Vagina (tissue), 2 donors: ENCODE measurements at regions of chr2 and their contacts with region 1.

Region 1: GRCh38 chr2:190853531-190854383 is 26.9 kb upstream of the GLS start:
- DNase-seq: no peak
- H3K4me3 ChIP-seq: no peak overlapping the region
- H3K27ac ChIP-seq: no peak overlapping the region
- H3K4me1 ChIP-seq: no peaks in the 10 kb centered on the region
- H3K27me3 ChIP-seq: no peaks in the 10 kb centered on the region
- CTCF ChIP-seq: no peak
- POLR2A ChIP-seq: no peak

Region 2: GRCh38 chr2:190959911-190960788 is 106.4 kb after region 1 on chr2:
- intact Hi-C with region 1: no loop called
- DNase-seq: no peak
- H3K4me3 ChIP-seq: no peak overlapping the region
- H3K27ac ChIP-seq: no peak overlapping the region
- H3K4me1 ChIP-seq: no peaks in the 10 kb centered on the region
- H3K27me3 ChIP-seq: no peaks in the 10 kb centered on the region
- CTCF ChIP-seq: no peak
- POLR2A ChIP-seq: no peak

Region 3: GRCh38 chr2:191030521-191031154 is 176.9 kb after region 1 on chr2:
- intact Hi-C with region 1: loop called (anchors 10 kb)
- DNase-seq: no peak
- H3K4me3 ChIP-seq: no peak overlapping the region
- H3K27ac ChIP-seq: no peak overlapping the region
- H3K4me1 ChIP-seq: no peaks in the 10 kb centered on the region
- H3K27me3 ChIP-seq: no peaks in the 10 kb centered on the region
- CTCF ChIP-seq: peak; percentile 9 to 65 (median 29)
- POLR2A ChIP-seq: no peak